ENCODE measurements at regions of chr11 and their contacts with region 1.

Region 1: GRCh38 chr11:75858611-75859010 is 43.6 kb downstream of the UVRAG start:
- DNase-seq: no peak
- H3K4me3 ChIP-seq: no peak overlapping the region
- H3K27ac ChIP-seq: no peak overlapping the region
- H3K4me1 ChIP-seq: peaks cover 0 to 13% (median 4%) of the 10 kb centered on the region in 4 donors
- H3K27me3 ChIP-seq: no peaks in the 10 kb centered on the region
- CTCF ChIP-seq: no peak

Region 2: GRCh38 chr11:76086743-76087635 is 228.4 kb after region 1 on chr11:
- intact Hi-C with region 1: loop called (anchors 5 kb)
- DNase-seq: no peak
- H3K4me3 ChIP-seq: no peak overlapping the region
- H3K27ac ChIP-seq: no peak overlapping the region
- H3K4me1 ChIP-seq: peaks cover 0 to 24% (median 0%) of the 10 kb centered on the region in 4 donors
- H3K27me3 ChIP-seq: no peaks in the 10 kb centered on the region
- CTCF ChIP-seq: no peak

Region 3: GRCh38 chr11:76120513-76121101 is 262.0 kb after region 1 on chr11:
- intact Hi-C with region 1: no loop called
- DNase-seq: no peak
- H3K4me3 ChIP-seq: no peak overlapping the region
- H3K27ac ChIP-seq: no peak overlapping the region
- H3K4me1 ChIP-seq: peaks cover 0 to 62% (median 12%) of the 10 kb centered on the region in 4 donors
- H3K27me3 ChIP-seq: no peaks in the 10 kb centered on the region
- CTCF ChIP-seq: no peak